Posterior cingulate gyrus (tissue), 11 donors: ENCODE measurements at regions of chr9 and their contacts with region 1.

Region 1: DNA sequence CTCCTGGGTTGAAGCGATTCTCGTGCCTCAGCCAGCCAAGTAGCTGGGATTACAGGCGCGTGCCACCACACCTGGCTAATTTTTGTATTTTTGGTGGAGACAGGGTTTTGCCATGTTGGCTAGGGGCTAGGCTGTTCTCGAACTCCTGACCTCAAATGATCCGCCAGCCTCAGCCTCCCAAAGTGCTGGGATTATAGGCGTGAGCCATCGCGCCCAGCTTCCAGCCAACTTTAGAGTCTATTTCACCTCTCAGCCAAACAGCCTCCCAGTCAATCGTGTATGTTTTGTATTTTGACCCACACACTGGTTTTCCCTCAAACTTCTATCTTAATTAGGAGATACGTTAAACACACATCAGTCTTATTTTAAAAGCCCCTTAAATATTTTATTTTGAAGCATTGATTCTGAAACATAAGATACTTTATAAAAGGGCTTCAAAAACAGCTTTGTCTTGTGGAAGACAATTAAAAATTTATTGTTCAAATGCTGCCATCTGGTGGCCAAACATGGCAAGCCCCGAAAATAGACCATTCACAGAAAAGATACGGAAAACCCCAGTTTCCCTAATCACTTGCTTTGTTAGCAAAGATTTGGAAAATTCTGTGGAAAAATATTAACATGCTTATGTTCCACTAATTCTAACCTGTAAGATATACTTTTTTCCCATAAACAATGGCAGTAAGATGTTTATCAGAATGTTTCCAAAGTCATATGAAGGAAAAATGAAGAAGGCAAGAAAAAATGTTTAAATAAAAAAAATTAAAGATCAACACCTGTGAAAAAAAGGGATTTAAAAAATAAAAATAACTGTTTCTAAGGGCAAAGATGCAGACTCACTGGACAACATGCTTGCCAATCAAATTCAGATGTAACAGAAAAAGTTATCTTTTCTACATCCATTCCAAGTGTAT is 33.1 kb downstream of the APTX start:
- DNase-seq: peak in 7 of 10 donors; percentile 22 to 83 (median 66)

Region 2: GRCh38 chr9:32589083-32589723 is 379.2 kb before region 1 on chr9:
- intact Hi-C with region 1: loop called (anchors 2 kb)
- DNase-seq: no peak

Region 3: DNA sequence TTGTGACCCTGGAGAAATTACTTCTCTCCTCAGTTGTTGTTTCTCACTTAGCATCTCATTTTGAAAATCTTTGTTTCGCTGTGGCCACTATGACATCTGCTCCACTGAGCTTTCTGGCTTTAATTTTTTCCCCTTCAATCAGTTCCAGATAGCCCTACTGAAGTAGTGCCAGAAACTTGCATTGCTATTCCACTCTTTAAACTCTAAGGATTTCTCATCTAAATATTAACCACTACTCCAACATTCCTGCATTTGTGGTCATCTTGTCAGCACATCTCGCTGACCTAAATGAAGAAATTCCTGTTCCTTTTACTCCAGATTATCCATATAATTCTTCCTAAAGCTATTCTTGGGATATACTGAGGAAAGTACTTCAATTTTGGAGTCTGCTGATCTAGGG is 520.7 kb after region 1 on chr9:
- intact Hi-C with region 1: no loop called
- DNase-seq: no peak